ENCODE measurements at regions of chr1 and their contacts with region 1.

Region 1: GRCh38 chr1:9957726-9958125 is 14.5 kb downstream of the NMNAT1 start:
- DNase-seq: no peak
- H3K4me3 ChIP-seq: no peak overlapping the region
- H3K27ac ChIP-seq: no peak overlapping the region
- H3K4me1 ChIP-seq: no peaks in the 10 kb centered on the region
- H3K27me3 ChIP-seq: no peaks in the 10 kb centered on the region
- CTCF ChIP-seq: no peak
- POLR2A ChIP-seq: no peak

Region 2: GRCh38 chr1:10161541-10162290 is 204.0 kb after region 1 on chr1:
- intact Hi-C with region 1: loop called (anchors 10 kb)
- DNase-seq: no peak
- H3K4me3 ChIP-seq: no peak overlapping the region
- H3K27ac ChIP-seq: peak overlapping the region in 2 of 3 donors; percentile 19 to 36
- H3K4me1 ChIP-seq: peaks cover 9 to 12% of the 10 kb centered on the region in 2 donors
- H3K27me3 ChIP-seq: no peaks in the 10 kb centered on the region
- CTCF ChIP-seq: no peak
- POLR2A ChIP-seq: no peak